Activated T-helper 2 cell treated with anti-CD3 and anti-CD28 coated beads, Interferon-gamma antibody, Interleukin-2, Interleukin-4, amounts not matched to agents 10 μg/mL and 5 μg/mL and 100 μg/mL, durations not matched to agents 14 hours and 24 hours and 36 hours (primary cell): ENCODE measurements at regions of chr7 and their contacts with region 1.

Region 1: GRCh38 chr7:47991741-47992311 is 12.4 kb upstream of the HUS1 start:
- DNase-seq: peak; percentile 84
- H3K4me3 Mint-ChIP-seq: peak overlapping the region; percentile 85
- H3K27ac Mint-ChIP-seq: peak overlapping the region; percentile 89
- H3K4me1 Mint-ChIP-seq: peaks cover 20% of the 10 kb centered on the region
- H3K27me3 Mint-ChIP-seq: peaks cover 1% of the 10 kb centered on the region

Region 2: DNA sequence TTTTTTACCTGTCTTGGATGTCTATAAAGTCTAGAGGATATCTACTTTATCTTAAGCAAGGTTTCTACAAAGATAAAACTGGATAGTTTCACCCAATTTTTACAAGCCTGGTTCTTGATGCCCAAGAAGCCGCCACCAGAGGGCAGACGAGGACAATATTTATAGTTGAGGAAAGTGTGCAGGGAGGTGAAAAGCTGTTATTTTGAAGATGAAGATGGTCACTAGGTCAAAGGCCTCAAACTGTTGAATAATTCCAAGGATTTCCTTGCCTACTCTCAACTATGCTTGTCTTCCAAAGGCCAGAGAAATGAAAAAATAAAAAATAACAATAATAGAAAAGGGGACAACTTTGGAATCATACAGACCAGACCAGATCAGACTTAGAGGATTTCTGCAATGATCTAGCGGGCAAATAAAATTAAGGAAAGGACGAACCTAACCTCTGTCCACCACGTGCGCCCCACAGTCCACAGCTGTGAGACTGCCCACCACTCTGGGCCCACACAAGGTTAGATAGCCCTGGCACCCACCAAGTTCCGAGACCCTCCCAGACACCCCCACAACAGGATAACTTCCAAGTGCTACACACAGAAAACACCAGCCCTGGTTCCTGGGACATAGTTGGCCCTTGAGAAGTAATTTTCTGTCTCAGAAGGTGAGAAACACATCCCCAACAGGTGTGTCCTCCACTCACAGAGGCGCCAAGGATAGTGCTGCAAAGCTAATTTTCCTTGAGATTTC is 46.4 kb before region 1 on chr7:
- intact Hi-C with region 1: loop called (anchors 5 kb)
- DNase-seq: peak; percentile 52
- H3K4me3 Mint-ChIP-seq: no peak overlapping the region
- H3K27ac Mint-ChIP-seq: no peak overlapping the region
- H3K4me1 Mint-ChIP-seq: peaks cover 11% of the 10 kb centered on the region
- H3K27me3 Mint-ChIP-seq: no peaks in the 10 kb centered on the region

Region 3: GRCh38 chr7:47956220-47956619 is 35.6 kb before region 1 on chr7:
- intact Hi-C with region 1: no loop called
- DNase-seq: no peak
- H3K4me3 Mint-ChIP-seq: no peak overlapping the region
- H3K27ac Mint-ChIP-seq: no peak overlapping the region
- H3K4me1 Mint-ChIP-seq: peaks cover 33% of the 10 kb centered on the region
- H3K27me3 Mint-ChIP-seq: no peaks in the 10 kb centered on the region

Region 4: DNA sequence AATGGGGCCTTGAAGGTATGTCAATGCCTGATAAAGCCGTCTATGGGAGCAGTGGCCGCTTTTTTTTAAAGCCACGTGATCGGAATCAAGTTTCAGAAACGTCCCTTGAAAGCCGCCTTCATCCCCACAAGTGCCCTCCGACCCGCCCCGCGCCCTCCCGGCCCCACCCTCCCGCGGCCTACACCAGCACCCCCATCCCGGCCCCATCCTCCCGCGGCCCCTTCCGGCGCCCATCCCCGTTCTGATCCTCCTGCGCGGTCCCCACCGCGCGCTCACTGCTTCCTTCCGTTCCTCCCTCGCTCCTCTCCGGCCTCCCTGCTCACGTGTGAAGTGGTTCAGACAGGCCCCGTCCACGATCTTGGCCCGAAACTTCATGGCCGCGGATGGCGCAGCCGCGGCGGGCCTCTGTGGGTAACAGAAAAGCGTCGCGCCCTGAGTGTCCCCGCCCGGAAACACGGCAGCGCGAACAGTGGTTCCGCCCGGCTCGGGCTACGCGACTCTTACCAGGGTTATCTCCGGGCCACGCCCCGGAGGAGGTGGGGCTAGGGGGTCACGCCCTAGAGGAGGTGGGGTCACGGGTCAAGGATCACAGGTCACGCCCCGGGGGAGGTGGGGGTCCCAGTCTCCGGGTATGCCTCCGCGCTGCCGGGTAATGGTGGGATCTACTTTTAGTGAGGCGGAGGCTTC is 12.5 kb before region 1 on chr7 and contains the start of gene HUS1:
- intact Hi-C with region 1: loop called (anchors 1 kb)
- DNase-seq: peak; percentile 90
- H3K4me3 Mint-ChIP-seq: peak within 1 kb of the TSS; percentile 90
- H3K27ac Mint-ChIP-seq: peak within 1 kb of the TSS; percentile 95
- H3K4me1 Mint-ChIP-seq: peaks cover 14% of the 10 kb centered on the region
- H3K27me3 Mint-ChIP-seq: peaks cover 1% of the 10 kb centered on the region
- total RNA-seq, gene HUS1: 33.8 and 36.6 TPM in 2 replicates

Region 5: DNA sequence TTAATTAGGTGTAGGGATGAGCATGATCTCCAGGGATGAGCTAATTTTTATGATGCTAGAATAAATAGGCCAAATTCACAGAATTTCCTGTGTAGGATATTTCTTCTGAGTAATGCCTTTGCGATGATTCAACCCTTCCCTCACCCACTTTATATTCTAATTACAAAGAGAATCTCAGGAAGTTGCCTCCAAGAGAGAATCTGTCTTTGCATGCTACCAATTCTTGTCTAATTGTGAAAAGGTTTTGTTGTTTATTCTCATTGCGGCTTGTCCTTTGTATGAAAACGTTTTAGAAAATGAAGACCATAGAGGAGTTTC is 49.8 kb after region 1 on chr7:
- intact Hi-C with region 1: loop called (anchors 2 kb)
- DNase-seq: no peak
- H3K4me3 Mint-ChIP-seq: no peak overlapping the region
- H3K27ac Mint-ChIP-seq: peak overlapping the region; percentile 47
- H3K4me1 Mint-ChIP-seq: peaks cover 23% of the 10 kb centered on the region
- H3K27me3 Mint-ChIP-seq: peaks cover 22% of the 10 kb centered on the region

Region 6: DNA sequence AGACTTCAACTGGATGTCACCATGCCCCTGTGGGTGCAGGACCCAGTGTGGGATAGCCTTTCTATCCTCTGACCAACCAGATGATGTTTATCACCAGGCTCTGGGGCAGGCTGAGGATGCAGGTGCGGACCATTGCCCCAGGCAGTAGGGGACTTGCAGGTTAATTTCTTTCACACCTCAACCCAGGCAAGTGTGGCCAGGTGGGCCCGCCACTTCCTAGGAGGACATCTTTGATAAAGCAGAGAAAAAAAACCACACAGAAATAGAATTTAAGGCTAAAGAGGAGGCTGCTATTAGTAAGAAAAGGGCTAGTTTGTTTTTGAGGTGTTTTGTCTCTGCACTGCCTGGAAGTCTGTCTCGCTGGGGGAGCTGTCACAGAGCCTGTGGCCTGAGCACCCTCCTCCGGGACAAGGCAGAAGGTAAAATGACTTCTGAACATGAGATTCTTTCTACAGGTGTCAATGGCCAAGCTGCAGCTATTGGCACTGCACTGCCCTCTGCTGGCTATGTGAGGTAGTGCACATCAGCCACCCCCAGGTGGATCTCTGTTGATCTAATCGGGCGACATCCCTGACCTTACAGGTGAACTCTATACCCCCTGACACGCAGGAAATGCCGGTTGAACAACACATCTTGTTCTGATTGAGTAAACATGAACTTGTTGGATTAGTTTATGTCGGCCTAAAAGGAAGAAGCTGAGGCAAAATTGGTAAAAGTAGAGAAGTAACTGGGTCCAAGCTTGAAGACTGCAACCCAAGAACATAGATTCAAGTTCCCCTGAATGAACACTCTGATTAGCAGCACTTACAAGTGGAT is 118.2 kb after region 1 on chr7:
- intact Hi-C with region 1: loop called (anchors 1 kb)
- DNase-seq: peak; percentile 75
- H3K4me3 Mint-ChIP-seq: no peak overlapping the region
- H3K27ac Mint-ChIP-seq: no peak overlapping the region
- H3K4me1 Mint-ChIP-seq: peaks cover 9% of the 10 kb centered on the region
- H3K27me3 Mint-ChIP-seq: no peaks in the 10 kb centered on the region

Region 7: GRCh38 chr7:48251766-48252165 is 259.9 kb after region 1 on chr7:
- intact Hi-C with region 1: loop called (anchors 10 kb)
- DNase-seq: no peak
- H3K4me3 Mint-ChIP-seq: no peak overlapping the region
- H3K27ac Mint-ChIP-seq: peak overlapping the region; percentile 26
- H3K4me1 Mint-ChIP-seq: peaks cover 30% of the 10 kb centered on the region
- H3K27me3 Mint-ChIP-seq: peaks cover 3% of the 10 kb centered on the region